Head of caudate nucleus (tissue), 42 donors: ENCODE measurements at regions of chr4 and their contacts with region 1.

Region 1: DNA sequence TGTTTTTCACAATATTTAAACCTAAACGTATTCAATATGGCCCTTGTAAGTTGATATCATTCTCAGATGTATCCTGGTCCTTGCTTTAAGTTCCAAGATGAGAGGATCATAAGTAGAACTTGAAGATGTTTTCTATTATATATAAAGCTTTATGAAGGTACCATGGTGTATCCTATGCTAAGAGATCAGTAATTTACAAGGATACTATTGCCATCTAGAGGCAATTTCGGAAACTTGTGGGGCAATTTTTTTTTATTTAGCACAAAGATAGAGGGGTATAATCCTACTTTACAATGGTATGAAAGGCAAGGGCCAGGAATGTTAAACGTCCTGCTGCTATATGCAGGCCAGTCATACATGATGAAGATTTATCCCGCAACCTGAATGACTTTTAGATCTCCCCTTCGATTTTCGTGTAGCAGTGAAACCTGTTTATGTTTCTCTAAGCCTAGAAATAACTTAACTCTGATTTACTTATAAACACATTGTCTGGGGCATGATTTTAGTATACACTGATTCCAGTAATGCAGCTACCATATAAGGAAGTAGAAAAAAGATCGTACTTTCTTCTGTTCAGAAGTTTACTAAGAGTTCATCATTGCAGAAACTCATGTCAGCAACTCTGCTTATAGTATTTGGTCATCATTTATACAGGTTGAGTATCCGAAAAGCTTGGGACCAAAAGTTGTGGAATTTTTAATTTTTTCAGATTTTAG is 2.6 kb downstream of the SLC25A31 start:
- DNase-seq: peak in 1 of 42 donors; percentile 27

Region 2: DNA sequence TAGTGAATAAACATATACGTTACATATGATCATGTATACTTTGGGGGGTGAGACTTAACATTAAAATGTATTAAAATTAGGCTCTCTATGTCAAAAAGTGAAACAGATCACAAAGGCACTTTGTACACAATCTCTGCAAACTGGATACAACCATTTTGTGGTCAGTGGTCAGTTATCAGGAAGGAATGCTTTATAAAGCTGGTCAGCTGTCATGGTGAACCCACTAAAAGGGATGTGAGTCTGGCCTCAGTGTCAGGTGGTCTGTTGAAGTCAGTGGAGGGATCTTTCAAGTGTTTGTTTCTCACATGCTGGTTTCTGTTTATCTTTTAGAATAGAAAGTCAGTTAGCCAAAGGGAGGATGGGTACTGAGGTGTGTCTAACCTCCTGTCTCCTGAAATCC is 975.6 kb before region 1 on chr4:
- intact Hi-C with region 1: no loop called
- DNase-seq: no peak

Region 3: DNA sequence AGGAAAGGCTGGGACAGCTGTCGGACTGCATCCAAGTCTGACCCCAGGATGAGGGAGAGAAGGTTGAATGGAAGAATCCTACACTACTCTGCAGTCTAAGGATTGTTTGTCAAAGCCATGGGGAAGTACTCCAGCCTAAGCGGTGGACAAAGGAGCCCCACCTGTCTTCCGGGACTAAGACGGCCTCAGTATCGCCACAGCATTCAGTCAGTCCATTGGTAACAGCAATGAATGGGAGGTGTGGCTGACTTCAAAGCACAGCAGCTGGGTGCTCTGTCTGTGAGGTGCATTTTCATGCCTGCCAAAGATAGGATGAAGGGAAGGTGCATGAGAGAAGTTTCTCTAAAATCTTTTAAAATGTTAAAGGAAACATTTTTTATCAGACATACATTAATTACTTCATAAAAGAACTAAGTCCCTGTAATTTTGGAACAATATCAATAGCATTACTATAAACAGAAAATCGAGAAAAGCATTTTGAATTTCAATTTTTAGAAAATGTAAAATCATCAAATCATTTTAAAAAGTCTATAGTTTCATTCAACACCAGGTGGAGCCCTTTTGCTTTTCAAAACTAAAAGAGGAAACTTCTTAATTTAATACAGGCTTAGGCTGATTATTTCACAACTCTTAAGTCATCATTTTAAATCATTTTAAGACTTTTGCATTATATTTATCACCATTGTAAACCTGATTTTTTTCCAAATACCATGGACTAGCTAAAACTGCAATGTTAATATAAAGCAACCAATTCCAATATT is 127.6 kb before region 1 on chr4:
- intact Hi-C with region 1: loop called (anchors 5 kb)
- DNase-seq: no peak

Region 4: GRCh38 chr4:127610488-127610887 is 122.3 kb before region 1 on chr4:
- intact Hi-C with region 1: loop called (anchors 5 kb)
- DNase-seq: no peak